ENCODE measurements at regions of chr16 and their contacts with region 1.

Region 1: GRCh38 chr16:57741660-57742191 is 6.2 kb downstream of the KATNB1 start:
- DNase-seq: peak in 1 of 2 experiments; percentile 34
- H3K4me3 ChIP-seq: no peak overlapping the region
- H3K27ac ChIP-seq: no peak overlapping the region
- H3K4me1 ChIP-seq: peaks cover 0 to 3% (median 3%) of the 10 kb centered on the region in 4 experiments; a peak in 4 of 7 replicates
- H3K27me3 ChIP-seq: no peaks in the 10 kb centered on the region
- CTCF ChIP-seq: no peak
- EP300 ChIP-seq: no peak
- POLR2A ChIP-seq: no peak
- RAD21 ChIP-seq: no peak

Region 2: DNA sequence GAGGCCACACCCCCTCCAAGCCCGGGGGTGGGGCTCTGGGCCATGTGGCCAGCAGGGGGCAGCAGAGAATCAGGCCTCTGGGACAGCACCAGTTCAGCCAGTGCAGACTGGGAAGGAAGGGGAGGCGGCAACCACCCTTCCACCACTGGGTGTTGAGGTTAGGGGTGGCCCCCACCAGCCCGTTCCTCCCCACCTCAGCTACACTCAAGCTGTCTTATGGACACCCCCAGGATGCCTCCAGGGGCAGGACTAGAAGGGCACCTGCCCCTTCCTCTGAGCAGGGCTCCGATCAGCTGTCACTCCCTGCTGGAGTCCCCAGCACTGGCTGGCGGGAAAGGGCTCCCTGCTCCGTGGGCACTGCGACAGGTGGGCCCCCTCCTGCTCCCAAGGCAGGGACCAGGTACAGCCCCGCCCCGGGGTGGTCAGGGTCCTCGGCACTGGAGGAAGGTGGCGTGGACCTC is 15.6 kb after region 1 on chr16:
- CTCF ChIA-PET with region 1: interaction called, 24 read pairs
- POLR2A ChIA-PET with region 1: interaction called, 13 read pairs
- DNase-seq: peak in 1 of 2 experiments; percentile 99
- H3K4me3 ChIP-seq: no peak overlapping the region
- H3K27ac ChIP-seq: no peak overlapping the region
- H3K4me1 ChIP-seq: peaks cover 0 to 12% (median 7%) of the 10 kb centered on the region in 4 experiments; a peak in 4 of 7 replicates
- H3K27me3 ChIP-seq: no peaks in the 10 kb centered on the region; a peak in 1 of 7 replicates
- CTCF ChIP-seq: peak; percentile 89 to 93 (median 91)
- EP300 ChIP-seq: no peak
- POLR2A ChIP-seq: no peak
- RAD21 ChIP-seq: peak; percentile 86 to 91